GM12878 (cell line): ENCODE measurements at regions of chr1 and their contacts with region 1.

Region 1: DNA sequence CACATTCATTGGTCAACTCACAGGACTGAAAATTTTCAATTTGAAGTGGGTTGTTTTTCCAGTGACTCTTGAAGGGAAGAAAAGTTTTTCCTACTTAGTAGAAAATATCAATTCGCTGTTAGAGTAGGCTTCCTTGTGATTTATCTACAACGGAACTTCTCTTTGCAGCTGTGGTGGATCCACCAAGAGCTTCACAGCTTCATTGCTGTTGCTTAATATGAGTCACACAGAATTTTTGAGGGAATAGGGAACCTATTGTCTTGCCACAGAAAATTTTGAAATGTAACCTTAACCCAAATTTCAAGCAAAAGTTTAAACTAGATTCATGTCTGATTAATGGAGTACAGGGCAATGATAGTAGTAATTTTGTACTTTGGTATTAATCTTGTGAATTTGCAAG is 58.4 kb upstream of the IFI44L start:
- DNase-seq: no peak
- ATAC-seq: no peak
- H3K4me3 ChIP-seq: no peak overlapping the region
- H3K27ac ChIP-seq: no peak overlapping the region
- H3K4me1 ChIP-seq: no peaks in the 10 kb centered on the region
- H3K27me3 ChIP-seq: no peaks in the 10 kb centered on the region
- CTCF ChIP-seq: no peak
- EP300 ChIP-seq: no peak
- POLR2A ChIP-seq: no peak
- RAD21 ChIP-seq: no peak

Region 2: DNA sequence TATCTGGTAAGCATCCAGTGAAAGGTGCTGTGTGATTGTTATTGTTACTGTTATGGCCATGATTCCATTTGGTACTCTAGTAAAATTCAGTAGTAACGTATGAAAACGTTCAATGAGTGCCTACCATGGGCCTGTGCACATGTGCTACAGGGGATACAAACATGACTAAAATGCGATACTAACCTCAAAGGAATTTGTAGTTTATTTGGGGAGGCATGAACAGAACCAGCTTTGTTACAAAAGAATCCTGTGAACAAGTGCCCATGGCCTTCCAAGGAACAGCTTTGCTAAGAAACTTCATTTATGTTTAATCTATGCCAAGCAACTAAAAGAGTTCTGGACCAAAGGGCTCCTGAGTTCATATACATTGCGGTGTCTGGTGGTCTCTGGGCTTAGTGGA is 42.4 kb before region 1 on chr1:
- CTCF ChIA-PET with region 1: no interaction called
- POLR2A ChIA-PET with region 1: interaction called, 11 read pairs
- RAD21 ChIA-PET with region 1: no interaction called
- SMC1A ChIA-PET with region 1: no interaction called
- in situ Hi-C with region 1: no loop called
- intact Hi-C with region 1: no loop called
- DNase-seq: no peak
- ATAC-seq: no peak
- H3K4me3 ChIP-seq: no peak overlapping the region
- H3K27ac ChIP-seq: no peak overlapping the region
- H3K4me1 ChIP-seq: no peaks in the 10 kb centered on the region
- H3K27me3 ChIP-seq: no peaks in the 10 kb centered on the region
- CTCF ChIP-seq: no peak
- EP300 ChIP-seq: no peak
- POLR2A ChIP-seq: no peak
- RAD21 ChIP-seq: no peak

Region 3: DNA sequence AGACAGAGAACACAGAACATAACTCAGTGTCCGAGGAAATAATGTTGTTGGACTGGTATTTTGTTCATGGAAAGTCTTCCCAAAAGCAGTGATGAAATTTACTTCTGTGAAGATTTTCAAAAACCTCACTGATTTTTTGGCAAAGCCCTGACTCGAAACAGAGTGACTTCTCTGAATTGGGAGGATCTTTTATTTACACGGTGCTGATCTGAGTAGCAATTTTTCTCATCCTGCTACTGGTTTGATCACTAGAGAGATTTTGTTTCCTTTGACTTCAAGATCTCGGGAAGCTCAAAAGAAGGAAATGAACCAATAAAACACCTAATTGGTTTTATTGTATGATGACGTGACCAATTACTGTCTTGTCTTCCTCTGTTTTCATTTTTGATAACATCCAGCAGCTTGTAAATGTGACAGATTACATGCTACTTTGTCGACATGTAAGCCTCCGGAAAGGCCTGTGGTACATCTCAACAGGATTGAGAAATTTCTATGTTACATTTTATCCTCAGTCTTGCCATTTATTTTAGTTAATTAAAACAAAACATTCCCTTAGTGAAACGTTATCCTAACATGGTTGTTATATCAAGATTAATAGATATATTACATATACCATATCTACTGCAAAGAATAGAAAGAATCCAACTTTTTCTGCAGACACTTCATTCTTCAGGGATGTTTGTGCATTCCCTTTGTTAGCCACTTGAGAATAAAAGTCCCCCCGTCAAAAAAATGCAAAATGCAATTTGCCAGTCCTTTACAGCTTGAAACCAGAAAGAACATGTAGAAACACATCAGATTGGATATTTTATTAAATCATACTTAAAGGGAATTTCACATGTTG is 15.6 kb after region 1 on chr1:
- CTCF ChIA-PET with region 1: no interaction called
- POLR2A ChIA-PET with region 1: no interaction called
- RAD21 ChIA-PET with region 1: no interaction called
- SMC1A ChIA-PET with region 1: no interaction called
- in situ Hi-C with region 1: no loop called
- intact Hi-C with region 1: no loop called
- DNase-seq: no peak
- ATAC-seq: no peak
- H3K4me3 ChIP-seq: no peak overlapping the region
- H3K27ac ChIP-seq: no peak overlapping the region
- H3K4me1 ChIP-seq: no peaks in the 10 kb centered on the region
- H3K27me3 ChIP-seq: no peaks in the 10 kb centered on the region
- CTCF ChIP-seq: no peak
- EP300 ChIP-seq: no peak
- POLR2A ChIP-seq: no peak
- RAD21 ChIP-seq: no peak